A673 (cell line): ENCODE measurements at regions of chr17 and their contacts with region 1.

Region 1: DNA sequence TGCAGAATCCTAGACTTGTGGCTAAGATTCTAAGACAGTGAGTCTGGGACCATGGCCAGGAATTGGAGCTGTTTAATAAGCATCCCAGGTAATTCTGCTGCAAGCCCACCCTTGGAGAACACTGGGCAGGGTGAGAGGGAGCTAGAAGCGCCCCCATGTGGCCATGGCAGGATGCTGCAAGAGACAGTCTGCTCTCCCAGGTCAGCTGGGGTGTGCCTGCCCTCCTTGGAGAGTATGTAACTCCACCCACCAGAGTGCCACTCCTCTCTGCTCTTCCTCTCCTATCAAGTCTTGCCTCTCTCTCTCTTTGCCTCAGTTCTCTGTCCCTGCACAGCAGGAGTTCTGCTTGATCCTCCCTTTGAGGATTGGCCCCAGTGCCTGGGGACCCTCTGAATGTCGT is 14.9 kb downstream of the RCVRN start:
- DNase-seq: peak; percentile 51
- H3K4me3 ChIP-seq: no peak overlapping the region
- H3K27ac ChIP-seq: no peak overlapping the region
- H3K4me1 ChIP-seq: no peaks in the 10 kb centered on the region
- H3K27me3 ChIP-seq: peaks cover 24% of the 10 kb centered on the region
- CTCF ChIP-seq: peak; percentile 77

Region 2: DNA sequence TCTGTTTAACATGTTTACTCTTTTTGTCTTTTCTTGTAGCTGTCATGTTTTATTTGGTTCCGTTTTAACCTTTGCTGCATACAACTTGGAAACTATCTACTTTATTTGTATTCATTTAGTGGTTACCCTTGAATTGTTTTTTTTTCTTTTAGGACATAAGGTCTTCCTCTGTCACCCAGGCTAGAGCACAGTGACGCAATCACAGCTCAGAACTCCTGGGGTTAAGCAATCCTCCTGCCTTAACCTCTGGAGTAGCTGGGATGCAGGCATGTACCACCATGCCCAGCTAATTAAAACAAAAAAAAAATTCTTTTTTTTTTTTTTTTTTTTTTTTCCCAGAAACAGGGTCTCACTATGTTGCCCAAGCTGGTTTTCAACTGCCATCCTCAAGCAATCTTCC is 274.6 kb before region 1 on chr17:
- CTCF ChIA-PET with region 1: interaction called, 21 read pairs
- POLR2A ChIA-PET with region 1: no interaction called
- intact Hi-C with region 1: no loop called
- DNase-seq: no peak
- H3K4me3 ChIP-seq: no peak overlapping the region
- H3K27ac ChIP-seq: no peak overlapping the region
- H3K4me1 ChIP-seq: no peaks in the 10 kb centered on the region
- H3K27me3 ChIP-seq: no peaks in the 10 kb centered on the region
- CTCF ChIP-seq: no peak